Caco-2 (cell line): ENCODE measurements at regions of chr12 and their contacts with region 1.

Region 1: DNA sequence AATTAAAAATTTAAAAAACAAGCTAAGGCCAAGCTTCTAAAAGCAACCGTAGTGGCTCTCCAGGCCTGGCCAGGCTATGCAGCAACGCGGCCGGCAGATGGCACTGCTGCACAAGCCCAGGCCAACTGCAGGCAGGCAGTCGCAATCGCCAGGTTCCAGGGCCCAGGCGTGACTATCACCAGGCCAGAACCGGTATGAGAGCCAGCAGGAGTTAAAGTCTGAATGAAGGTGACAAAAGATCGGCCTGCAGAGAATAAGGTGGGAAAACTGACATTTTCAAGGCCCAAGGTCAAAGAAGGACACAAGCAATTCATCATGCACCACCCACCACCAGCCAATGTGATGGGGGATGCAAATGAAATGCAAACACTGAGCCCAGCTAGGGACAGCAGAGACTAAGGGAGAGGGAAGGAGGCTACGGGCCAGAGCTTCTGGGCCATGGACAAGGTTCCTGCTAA is 43.6 kb upstream of the ANO2 start:
- DNase-seq: peak; percentile 82 to 92
- H3K4me3 ChIP-seq: no peak overlapping the region
- H3K4me3 Mint-ChIP-seq: no peak overlapping the region
- H3K27ac Mint-ChIP-seq: no peak overlapping the region
- H3K4me1 ChIP-seq: no peaks in the 10 kb centered on the region
- H3K4me1 Mint-ChIP-seq: peaks cover 6% of the 10 kb centered on the region
- H3K27me3 ChIP-seq: no peaks in the 10 kb centered on the region
- H3K27me3 Mint-ChIP-seq: no peaks in the 10 kb centered on the region
- CTCF ChIP-seq: peak; percentile 98 to 99

Region 2: DNA sequence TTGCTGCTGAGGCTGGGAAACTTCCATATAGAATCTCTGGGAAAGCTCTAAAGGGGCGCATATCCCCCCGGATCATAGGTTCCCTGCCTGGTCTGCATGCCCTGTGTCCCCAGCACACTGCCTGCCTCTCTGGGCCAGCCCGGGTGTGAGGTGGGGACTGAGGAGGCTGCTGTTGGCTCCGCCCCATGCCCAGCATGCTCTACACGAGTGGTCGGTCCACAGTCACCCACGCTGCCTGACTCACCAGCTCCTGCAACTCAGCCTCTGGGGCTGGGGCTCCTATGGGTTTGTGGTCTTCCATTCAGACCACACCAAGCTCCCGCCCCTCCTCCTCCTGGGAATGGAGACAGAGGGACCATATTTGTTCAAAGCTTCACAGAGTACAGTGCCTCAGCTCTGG is 44.9 kb after region 1 on chr12:
- CTCF ChIA-PET with region 1: interaction called, 200 read pairs
- POLR2A ChIA-PET with region 1: no interaction called
- intact Hi-C with region 1: loop called (anchors 1 kb)
- DNase-seq: no peak
- H3K4me3 ChIP-seq: no peak overlapping the region
- H3K4me3 Mint-ChIP-seq: no peak overlapping the region
- H3K27ac Mint-ChIP-seq: no peak overlapping the region
- H3K4me1 ChIP-seq: no peaks in the 10 kb centered on the region
- H3K4me1 Mint-ChIP-seq: no peaks in the 10 kb centered on the region
- H3K27me3 ChIP-seq: no peaks in the 10 kb centered on the region
- H3K27me3 Mint-ChIP-seq: no peaks in the 10 kb centered on the region
- CTCF ChIP-seq: no peak

Region 3: GRCh38 chr12:6039894-6040568 is 51.3 kb after region 1 on chr12:
- CTCF ChIA-PET with region 1: interaction called, 200 read pairs
- POLR2A ChIA-PET with region 1: no interaction called
- intact Hi-C with region 1: loop called (anchors 1 kb)
- DNase-seq: peak; percentile 75 to 82
- H3K4me3 ChIP-seq: no peak overlapping the region
- H3K4me3 Mint-ChIP-seq: no peak overlapping the region
- H3K27ac Mint-ChIP-seq: no peak overlapping the region
- H3K4me1 ChIP-seq: no peaks in the 10 kb centered on the region
- H3K4me1 Mint-ChIP-seq: no peaks in the 10 kb centered on the region
- H3K27me3 ChIP-seq: no peaks in the 10 kb centered on the region
- H3K27me3 Mint-ChIP-seq: peaks cover 6% of the 10 kb centered on the region
- CTCF ChIP-seq: peak; percentile 97 to 99

Region 4: DNA sequence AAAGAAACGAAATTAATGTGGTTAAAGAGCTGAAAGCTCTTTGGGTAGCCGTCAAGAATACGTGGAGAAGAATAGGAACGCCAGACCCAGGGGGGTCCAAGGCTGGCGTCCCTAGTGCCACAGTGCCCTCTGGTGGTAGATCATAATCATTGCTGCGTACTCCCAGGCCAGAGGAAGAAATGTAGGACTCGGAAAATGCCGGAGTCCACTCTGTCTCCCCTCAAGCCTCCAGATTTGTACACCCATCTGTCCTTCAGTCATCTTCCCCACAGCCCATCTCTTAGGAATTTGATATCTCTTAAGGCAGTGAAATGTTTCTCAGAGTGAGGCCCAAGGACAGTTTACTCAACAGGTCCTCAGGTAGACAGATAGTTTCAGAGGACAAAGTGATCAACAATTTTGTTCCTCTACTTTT is 296.4 kb after region 1 on chr12:
- CTCF ChIA-PET with region 1: interaction called, 14 read pairs
- POLR2A ChIA-PET with region 1: no interaction called
- intact Hi-C with region 1: loop called (anchors 1 kb)
- DNase-seq: peak; percentile 76 to 87
- H3K4me3 ChIP-seq: no peak overlapping the region
- H3K4me3 Mint-ChIP-seq: no peak overlapping the region
- H3K27ac Mint-ChIP-seq: no peak overlapping the region
- H3K4me1 ChIP-seq: peaks cover 10% of the 10 kb centered on the region
- H3K4me1 Mint-ChIP-seq: peaks cover 11% of the 10 kb centered on the region
- H3K27me3 ChIP-seq: no peaks in the 10 kb centered on the region
- H3K27me3 Mint-ChIP-seq: no peaks in the 10 kb centered on the region
- CTCF ChIP-seq: peak; percentile 94 to 99